Activated CD4-positive, alpha-beta T cell treated with anti-CD3 and anti-CD28 coated beads, Interleukin-2, amount 10 ng/mL, durations not matched to agents 24 days and 14 days (primary cell): ENCODE measurements at regions of chr4 and their contacts with region 1.

Region 1: DNA sequence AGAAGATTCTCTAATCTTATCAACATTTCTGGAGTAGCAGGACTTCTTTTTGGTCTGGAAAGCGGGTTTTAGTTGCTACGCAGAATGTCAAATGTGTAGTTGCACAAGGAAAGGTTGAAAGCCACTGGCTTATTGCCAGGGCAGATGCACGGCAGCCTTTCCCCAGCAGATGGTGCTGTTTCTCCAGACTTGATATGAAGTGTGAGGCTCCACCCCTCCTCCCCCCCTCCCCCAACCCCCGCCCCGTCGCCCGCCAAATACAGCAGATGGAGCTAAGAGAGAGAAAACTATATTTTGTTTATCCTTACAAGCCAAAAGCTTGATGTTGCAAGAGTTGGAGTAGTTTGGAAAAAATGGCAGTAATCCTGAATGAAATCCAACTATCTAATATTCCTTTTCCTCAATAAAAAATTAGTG is 32.0 kb downstream of the ENOPH1 start:
- DNase-seq: peak; percentile 95
- H3K4me3 Mint-ChIP-seq: no peak overlapping the region
- H3K27ac Mint-ChIP-seq: no peak overlapping the region
- H3K4me1 Mint-ChIP-seq: peaks cover 4% of the 10 kb centered on the region
- H3K27me3 Mint-ChIP-seq: no peaks in the 10 kb centered on the region

Region 2: GRCh38 chr4:82450966-82451755 is 11.3 kb before region 1 on chr4:
- intact Hi-C with region 1: no loop called
- DNase-seq: no peak
- H3K4me3 Mint-ChIP-seq: no peak overlapping the region
- H3K27ac Mint-ChIP-seq: no peak overlapping the region
- H3K4me1 Mint-ChIP-seq: peaks cover 11% of the 10 kb centered on the region
- H3K27me3 Mint-ChIP-seq: no peaks in the 10 kb centered on the region

Region 3: DNA sequence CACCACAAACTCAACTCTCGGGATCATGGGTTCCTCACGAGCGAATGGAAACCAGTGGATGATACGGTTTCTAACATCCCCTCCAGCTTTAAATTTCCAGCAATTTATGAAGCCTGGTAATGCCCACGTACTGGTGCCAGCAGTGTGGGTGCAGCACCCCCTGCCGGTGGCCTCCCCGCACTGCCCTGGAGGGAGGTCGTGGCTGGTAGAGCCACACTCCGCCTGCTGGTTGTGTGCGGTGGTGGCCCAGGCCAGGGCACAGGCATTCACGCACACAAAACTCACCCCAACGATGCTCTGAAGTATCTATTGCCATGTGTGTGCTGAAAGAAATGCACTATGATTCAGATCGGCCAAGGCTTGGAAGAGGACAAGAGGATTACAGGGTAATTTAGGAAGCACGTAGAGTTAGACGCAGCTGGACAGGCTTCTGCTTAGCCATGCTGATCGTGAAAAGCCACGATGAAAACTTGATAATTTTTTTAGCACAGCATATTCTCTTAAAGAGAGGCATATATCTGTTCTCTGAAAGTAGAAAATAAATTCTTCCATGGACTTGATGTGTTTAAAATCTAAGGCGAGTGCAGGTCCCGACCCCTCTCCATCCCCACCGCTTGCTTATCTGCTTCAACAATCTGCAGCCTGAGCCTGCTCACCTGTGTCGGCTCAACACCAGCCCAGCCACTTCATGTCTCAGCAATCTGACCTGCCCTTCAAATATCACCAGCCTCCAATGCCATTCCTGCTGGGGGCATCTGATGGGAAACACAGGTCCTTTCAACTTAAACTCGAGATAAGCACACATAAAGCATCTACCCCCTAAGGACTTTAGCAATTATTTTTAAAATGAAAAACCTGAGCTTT is 277.1 kb after region 1 on chr4:
- intact Hi-C with region 1: loop called (anchors 1 kb)
- DNase-seq: peak; percentile 92
- H3K4me3 Mint-ChIP-seq: no peak overlapping the region
- H3K27ac Mint-ChIP-seq: no peak overlapping the region
- H3K4me1 Mint-ChIP-seq: peaks cover 2% of the 10 kb centered on the region
- H3K27me3 Mint-ChIP-seq: peaks cover 2% of the 10 kb centered on the region

Region 4: DNA sequence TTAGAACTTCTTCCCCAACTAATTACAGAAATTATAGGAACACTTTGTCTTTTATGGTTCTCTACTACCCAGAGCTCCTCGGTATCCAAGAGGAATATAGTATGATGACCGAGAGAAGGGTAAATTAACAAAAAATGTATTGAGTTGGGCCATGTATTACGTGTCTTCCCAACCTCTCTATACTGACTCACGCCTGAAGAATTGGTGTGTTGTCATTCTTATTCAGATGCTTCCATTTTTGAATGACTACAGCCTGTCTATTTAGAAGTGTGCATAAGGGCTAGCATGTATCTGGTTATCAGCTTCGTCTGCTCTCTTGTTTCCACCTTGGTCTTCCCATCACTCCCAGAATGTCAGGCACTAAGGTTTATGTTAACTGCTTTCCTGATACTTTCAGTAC is 360.6 kb after region 1 on chr4:
- intact Hi-C with region 1: loop called (anchors 10 kb)
- DNase-seq: no peak
- H3K4me3 Mint-ChIP-seq: no peak overlapping the region
- H3K27ac Mint-ChIP-seq: no peak overlapping the region
- H3K4me1 Mint-ChIP-seq: peaks cover 12% of the 10 kb centered on the region
- H3K27me3 Mint-ChIP-seq: no peaks in the 10 kb centered on the region